ENCODE measurements at regions of chr15 and their contacts with region 1.

Region 1: GRCh38 chr15:98842192-98842966 is 165.2 kb downstream of the PGPEP1L start:
- DNase-seq: no peak
- ATAC-seq: no peak
- H3K4me3 ChIP-seq: no peak overlapping the region
- H3K27ac ChIP-seq: no peak overlapping the region
- H3K4me1 ChIP-seq: peaks cover 17% of the 10 kb centered on the region
- H3K27me3 ChIP-seq: no peaks in the 10 kb centered on the region
- CTCF ChIP-seq: no peak

Region 2: DNA sequence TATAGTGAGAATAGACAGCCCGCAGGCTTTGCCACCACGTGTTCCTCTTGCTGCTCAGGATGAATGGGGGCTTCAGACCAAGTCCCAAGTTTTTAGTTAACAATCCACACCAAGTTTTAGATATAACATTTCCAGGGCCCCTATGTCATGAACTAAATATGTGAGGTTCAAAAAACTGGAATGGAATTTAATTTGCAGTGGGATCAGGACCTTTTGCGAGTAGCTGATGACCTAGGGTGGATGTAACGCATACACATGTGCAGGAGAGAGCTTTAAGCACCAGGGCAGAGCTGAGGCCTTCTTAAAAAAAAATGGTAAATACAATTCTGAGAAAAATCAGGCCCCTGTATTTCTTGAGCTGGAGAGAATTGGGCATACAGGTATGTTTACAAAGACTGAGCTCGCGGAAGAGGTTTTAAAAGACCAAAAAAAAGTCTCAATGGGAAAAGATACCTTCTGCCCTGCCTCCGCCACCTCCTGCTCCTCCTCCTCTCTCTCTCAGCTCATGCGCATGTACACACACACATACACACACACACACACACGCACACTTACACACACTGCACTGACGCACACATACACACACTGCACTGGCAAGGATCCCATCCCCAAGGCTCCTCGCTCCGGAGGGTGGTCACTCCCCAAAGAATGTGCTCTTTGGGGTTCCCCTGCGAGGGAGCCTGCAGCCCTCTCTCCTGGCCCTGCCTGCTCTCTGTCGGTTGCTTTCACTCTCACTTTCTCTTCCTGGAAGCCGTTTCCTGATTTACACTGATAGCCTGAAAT is 242.3 kb before region 1 on chr15:
- intact Hi-C with region 1: no loop called
- DNase-seq: peak in 1 of 2 donors; percentile 47
- ATAC-seq: peak in 2 of 4 donors; percentile 13 to 27
- H3K4me3 ChIP-seq: peak overlapping the region; percentile 48
- H3K27ac ChIP-seq: no peak overlapping the region
- H3K4me1 ChIP-seq: no peaks in the 10 kb centered on the region
- H3K27me3 ChIP-seq: peaks cover 0 to 17% (median 3%) of the 10 kb centered on the region in 3 donors
- CTCF ChIP-seq: no peak

Region 3: GRCh38 chr15:98799461-98800390 is 42.7 kb before region 1 on chr15:
- intact Hi-C with region 1: loop called in 1 of 2 experiments (anchors 5 kb)
- DNase-seq: no peak
- ATAC-seq: peak in 2 of 4 donors; percentile 61 to 78
- H3K4me3 ChIP-seq: peak overlapping the region; percentile 46
- H3K27ac ChIP-seq: peak overlapping the region; percentile 64
- H3K4me1 ChIP-seq: peaks cover 32% of the 10 kb centered on the region
- H3K27me3 ChIP-seq: no peaks in the 10 kb centered on the region
- CTCF ChIP-seq: no peak

Measured in psoas muscle (tissue), 8 donors.